OCI-LY7 (cell line): ENCODE measurements at regions of chr11 and their contacts with region 1.

Region 1: DNA sequence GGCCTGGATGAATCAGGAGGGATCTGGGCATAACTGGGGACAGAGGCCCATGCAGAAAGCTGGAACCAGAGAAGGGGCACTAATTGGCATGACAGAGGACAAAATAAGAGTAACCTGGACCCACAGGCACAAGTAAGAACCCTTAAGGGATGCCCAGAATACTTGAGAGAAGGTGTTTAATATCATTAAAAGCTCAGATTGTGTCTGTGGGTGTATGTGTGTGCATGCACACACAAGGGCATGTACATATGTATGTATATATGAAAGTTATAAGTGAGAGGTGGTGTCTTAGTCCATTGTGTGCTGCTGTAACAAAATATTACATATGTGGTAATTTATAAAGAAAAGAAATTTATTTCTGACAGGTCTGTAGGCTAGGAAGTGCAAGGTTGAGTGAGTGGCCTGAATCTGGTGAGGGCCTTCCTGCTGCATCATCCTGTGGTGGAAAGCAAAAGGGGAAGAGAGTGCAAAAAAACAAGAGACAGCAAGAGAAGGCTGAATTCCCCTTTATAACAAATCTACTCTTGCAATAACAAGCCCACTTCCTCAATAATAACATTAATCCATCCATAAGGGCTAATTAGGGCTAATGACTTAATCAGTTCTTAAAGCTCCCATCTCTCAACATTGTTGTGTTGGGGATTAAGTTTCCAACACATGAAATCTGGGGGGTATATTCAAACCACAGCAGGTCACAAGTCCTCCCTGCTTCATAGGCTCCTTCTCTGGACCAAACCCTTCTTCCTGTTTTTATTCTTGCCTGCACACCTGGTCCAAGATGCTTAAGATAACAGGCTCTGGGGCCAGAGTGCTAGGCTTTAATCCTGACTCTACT is 68.3 kb upstream of the POU2AF2 start:
- DNase-seq: peak; percentile 91
- H3K4me3 ChIP-seq: peak overlapping the region; percentile 53
- H3K27ac ChIP-seq: peak overlapping the region; percentile 98
- H3K4me1 ChIP-seq: peaks cover 66% of the 10 kb centered on the region
- CTCF ChIP-seq: no peak

Region 2: GRCh38 chr11:110812086-110812733 is 365.0 kb before region 1 on chr11:
- CTCF ChIA-PET with region 1: no interaction called
- POLR2A ChIA-PET with region 1: no interaction called
- intact Hi-C with region 1: no loop called
- DNase-seq: no peak
- H3K4me3 ChIP-seq: no peak overlapping the region
- H3K27ac ChIP-seq: no peak overlapping the region
- H3K4me1 ChIP-seq: no peaks in the 10 kb centered on the region
- CTCF ChIP-seq: no peak

Region 3: DNA sequence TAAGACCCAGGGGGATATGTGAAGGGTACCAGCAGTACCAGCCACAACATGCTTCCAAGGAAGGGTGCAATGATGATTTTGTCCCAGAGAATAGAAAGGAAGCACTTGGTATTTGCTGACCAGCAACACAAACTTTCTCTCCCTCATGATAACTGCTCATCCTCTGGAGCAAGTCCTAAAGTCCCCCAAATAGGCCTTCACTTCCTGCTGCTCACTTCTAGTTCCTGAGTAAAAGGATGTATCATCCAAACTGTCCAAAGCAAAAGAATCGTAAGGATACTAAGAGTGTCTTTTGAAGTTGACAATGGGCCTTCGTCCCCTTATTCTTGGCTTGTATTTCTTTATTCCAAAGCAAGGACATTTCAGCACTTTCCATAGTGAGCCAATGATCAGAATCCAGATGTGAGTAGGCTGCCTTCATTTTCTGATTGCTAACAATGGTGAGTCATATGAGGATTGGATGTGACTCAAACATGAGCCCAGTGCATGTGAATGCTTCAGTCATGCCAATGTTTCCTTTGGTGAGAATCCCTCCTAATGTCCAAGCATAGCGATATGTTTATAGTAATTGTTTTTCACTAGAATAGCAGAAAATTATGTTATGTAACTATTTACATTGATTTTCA is 175.2 kb before region 1 on chr11:
- CTCF ChIA-PET with region 1: no interaction called
- POLR2A ChIA-PET with region 1: interaction called, 3 read pairs
- intact Hi-C with region 1: loop called (anchors 5 kb)
- DNase-seq: no peak
- H3K4me3 ChIP-seq: no peak overlapping the region
- H3K27ac ChIP-seq: no peak overlapping the region
- H3K4me1 ChIP-seq: peaks cover 35% of the 10 kb centered on the region
- CTCF ChIP-seq: no peak

Region 4: DNA sequence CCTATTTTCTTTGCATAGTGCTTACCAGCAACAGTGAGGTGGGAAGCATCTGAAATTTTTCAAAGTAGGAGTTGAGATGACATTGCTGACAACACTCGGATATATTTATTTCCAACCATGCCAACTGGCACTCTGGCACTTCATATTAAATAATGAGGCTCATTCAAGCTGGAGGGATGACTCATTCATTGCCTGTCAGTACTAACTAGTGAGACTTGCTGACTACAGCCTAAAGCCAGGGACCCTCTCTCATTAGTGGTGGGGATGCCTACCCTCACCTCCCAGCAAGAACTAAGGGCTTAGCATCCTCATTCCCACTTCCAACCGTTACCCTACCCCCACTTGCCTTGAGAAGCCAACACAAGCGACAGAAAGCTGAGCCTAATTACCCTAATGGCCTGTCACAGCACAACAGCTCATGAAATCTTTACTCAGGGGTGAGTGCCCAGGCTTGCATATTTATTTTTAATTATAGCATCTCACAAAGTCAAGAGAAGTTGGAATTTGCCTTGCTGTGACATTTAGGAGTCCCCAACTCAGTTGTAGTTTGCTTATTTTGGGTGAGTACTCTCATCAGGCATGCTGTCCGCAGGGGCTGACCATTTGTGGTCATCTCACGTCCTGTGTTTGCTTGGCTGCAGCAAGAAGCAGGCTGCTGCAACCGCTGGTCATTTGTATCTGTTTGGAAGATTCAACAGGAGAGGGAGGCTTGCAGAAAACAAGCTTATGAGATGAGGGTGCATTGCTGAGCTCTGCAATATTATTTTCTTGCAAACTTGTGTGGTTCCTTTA is 113.3 kb before region 1 on chr11:
- CTCF ChIA-PET with region 1: no interaction called
- POLR2A ChIA-PET with region 1: no interaction called
- intact Hi-C with region 1: no loop called
- DNase-seq: no peak
- H3K4me3 ChIP-seq: no peak overlapping the region
- H3K27ac ChIP-seq: no peak overlapping the region
- H3K4me1 ChIP-seq: no peaks in the 10 kb centered on the region
- CTCF ChIP-seq: no peak

Region 5: DNA sequence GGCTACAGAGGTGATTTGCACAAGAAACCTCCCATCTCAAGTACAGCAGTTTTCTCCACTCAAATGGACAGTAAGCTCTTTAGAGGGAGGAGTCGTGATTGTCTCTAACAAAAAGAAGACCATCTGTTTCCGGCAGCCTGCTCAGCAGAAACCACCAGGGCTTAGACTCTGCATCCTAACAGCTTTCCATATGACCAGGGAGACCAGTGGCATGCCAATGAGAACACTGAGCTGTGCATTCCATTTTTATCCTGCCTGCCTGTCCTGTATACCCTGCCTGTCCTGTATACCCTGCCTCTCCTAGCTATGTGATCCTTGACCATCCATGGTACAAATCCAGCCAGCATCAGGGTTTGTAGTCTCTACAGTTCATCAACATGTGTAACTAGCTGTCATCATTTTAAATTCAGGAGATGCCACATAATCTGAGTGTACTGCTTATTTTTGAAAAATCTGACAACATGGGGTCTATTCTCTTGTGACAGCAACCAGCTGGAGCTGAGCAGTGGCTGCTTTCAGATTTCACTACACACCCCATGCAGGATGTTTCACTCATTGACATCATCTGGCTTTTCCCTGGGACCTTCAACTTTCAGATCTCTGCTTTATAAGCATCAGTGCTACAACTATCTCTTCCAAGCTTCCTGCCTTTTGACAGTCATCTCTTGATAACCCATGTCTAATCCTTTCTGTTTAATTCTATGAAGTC is 17.8 kb after region 1 on chr11:
- CTCF ChIA-PET with region 1: interaction called, 3 read pairs
- POLR2A ChIA-PET with region 1: interaction called, 10 read pairs
- intact Hi-C with region 1: no loop called
- DNase-seq: no peak
- H3K4me3 ChIP-seq: no peak overlapping the region
- H3K27ac ChIP-seq: no peak overlapping the region
- H3K4me1 ChIP-seq: peaks cover 14% of the 10 kb centered on the region
- CTCF ChIP-seq: no peak

Region 6: DNA sequence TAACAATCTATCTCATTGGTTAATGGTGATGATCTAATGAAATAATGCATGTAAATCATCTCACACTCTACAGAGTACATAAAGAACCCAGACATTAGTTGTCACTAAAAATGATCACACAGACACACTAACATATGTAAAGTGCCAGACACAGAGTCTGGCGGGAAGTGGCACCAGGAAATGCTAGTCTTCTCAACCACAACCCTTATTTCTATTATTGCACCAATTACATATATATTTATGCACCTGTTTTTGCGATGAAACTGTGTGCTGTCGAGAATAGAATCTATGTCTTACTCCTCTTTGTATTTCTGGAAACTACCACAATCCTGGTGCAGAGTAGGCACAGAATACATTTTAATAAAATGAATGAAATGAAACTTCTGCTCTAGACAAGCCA is 95.2 kb after region 1 on chr11:
- CTCF ChIA-PET with region 1: interaction called, 3 read pairs
- POLR2A ChIA-PET with region 1: interaction called, 3 read pairs
- intact Hi-C with region 1: loop called (anchors 2 kb)
- DNase-seq: peak; percentile 71
- H3K4me3 ChIP-seq: peak overlapping the region; percentile 41
- H3K27ac ChIP-seq: peak overlapping the region; percentile 90
- H3K4me1 ChIP-seq: peaks cover 66% of the 10 kb centered on the region
- CTCF ChIP-seq: no peak

Region 7: GRCh38 chr11:111441443-111441842 is 264.2 kb after region 1 on chr11:
- CTCF ChIA-PET with region 1: no interaction called
- POLR2A ChIA-PET with region 1: interaction called, 4 read pairs
- intact Hi-C with region 1: loop called (anchors 5 kb)
- DNase-seq: no peak
- H3K4me3 ChIP-seq: no peak overlapping the region
- H3K27ac ChIP-seq: no peak overlapping the region
- H3K4me1 ChIP-seq: peaks cover 79% of the 10 kb centered on the region
- CTCF ChIP-seq: no peak